Endothelial cell of umbilical vein (primary cell): ENCODE measurements at regions of chr3 and their contacts with region 1.

Region 1: GRCh38 chr3:141738022-141738890 is at the start of gene RNF7:
- DNase-seq: peak; percentile 96
- H3K4me3 ChIP-seq: peak within 1 kb of the TSS; percentile 39 to 96 (median 85)
- H3K27ac ChIP-seq: peak within 1 kb of the TSS; percentile 72
- H3K4me1 ChIP-seq: peaks cover 19% of the 10 kb centered on the region
- H3K27me3 ChIP-seq: peaks cover 0 to 2% of the 10 kb centered on the region in 2 experiments
- CTCF ChIP-seq: peak; percentile 91 to 98
- POLR2A ChIP-seq: peak; percentile 76
- total RNA-seq, gene RNF7: 121 and 136 TPM in 2 replicates

Region 2: DNA sequence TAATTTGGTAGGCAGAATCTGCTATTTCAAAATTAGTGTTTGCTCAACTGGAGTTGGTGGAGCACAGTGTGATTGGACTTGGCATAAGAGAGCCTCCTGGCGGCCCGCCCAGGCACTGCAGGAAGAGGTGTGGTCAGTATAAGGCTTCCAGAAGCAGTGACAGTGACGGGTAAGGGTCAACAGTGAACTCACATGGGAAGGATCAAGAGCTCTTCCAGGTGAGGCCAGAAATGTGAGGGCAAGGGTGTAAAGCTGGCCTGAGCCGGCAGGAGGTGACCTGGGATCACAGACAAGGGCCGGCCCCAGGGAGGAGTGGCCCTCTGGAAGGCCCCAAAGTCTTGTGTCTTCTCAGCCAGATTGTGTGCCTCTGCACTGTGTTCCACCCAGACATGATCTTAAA is 93.3 kb before region 1 on chr3:
- CTCF ChIA-PET with region 1: no interaction called
- POLR2A ChIA-PET with region 1: no interaction called
- dilution Hi-C with region 1: no loop called
- intact Hi-C with region 1: loop called (anchors 1 kb)
- DNase-seq: peak; percentile 43
- H3K4me3 ChIP-seq: no peak overlapping the region
- H3K27ac ChIP-seq: no peak overlapping the region
- H3K4me1 ChIP-seq: no peaks in the 10 kb centered on the region
- H3K27me3 ChIP-seq: no peaks in the 10 kb centered on the region
- CTCF ChIP-seq: peak; percentile 76 to 88
- POLR2A ChIP-seq: no peak

Region 3: GRCh38 chr3:141753399-141753798 is 15.1 kb after region 1 on chr3:
- CTCF ChIA-PET with region 1: interaction called, 10 read pairs
- POLR2A ChIA-PET with region 1: no interaction called
- dilution Hi-C with region 1: no loop called
- intact Hi-C with region 1: no loop called
- DNase-seq: no peak
- H3K4me3 ChIP-seq: no peak overlapping the region
- H3K27ac ChIP-seq: no peak overlapping the region
- H3K4me1 ChIP-seq: no peaks in the 10 kb centered on the region
- H3K27me3 ChIP-seq: no peaks in the 10 kb centered on the region
- CTCF ChIP-seq: no peak
- POLR2A ChIP-seq: no peak

Region 4: DNA sequence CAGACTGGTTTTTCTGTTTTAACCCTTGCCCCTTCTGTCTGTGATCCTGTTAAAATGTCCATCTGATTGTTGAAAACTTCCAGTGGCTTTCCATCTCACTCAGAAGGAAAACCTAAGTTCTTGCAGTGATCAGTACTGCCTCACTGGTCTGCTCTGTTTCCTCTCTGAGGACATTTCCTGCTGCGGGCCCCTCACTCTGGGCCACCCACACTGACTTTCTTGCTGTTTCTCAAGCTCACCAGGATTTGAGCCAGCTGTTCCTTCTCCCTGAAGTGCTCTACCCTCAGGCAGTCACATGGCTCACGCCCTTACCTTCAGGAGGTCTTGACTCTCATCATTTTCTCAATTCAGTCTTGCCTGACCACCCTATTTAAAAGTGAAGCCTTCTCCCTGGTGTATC is 26.7 kb after region 1 on chr3:
- CTCF ChIA-PET with region 1: no interaction called
- POLR2A ChIA-PET with region 1: no interaction called
- dilution Hi-C with region 1: no loop called
- intact Hi-C with region 1: no loop called
- DNase-seq: no peak
- H3K4me3 ChIP-seq: no peak overlapping the region
- H3K27ac ChIP-seq: no peak overlapping the region
- H3K4me1 ChIP-seq: peaks cover 3% of the 10 kb centered on the region
- H3K27me3 ChIP-seq: peaks cover 0 to 4% of the 10 kb centered on the region in 2 experiments
- CTCF ChIP-seq: no peak
- POLR2A ChIP-seq: no peak

Region 5: DNA sequence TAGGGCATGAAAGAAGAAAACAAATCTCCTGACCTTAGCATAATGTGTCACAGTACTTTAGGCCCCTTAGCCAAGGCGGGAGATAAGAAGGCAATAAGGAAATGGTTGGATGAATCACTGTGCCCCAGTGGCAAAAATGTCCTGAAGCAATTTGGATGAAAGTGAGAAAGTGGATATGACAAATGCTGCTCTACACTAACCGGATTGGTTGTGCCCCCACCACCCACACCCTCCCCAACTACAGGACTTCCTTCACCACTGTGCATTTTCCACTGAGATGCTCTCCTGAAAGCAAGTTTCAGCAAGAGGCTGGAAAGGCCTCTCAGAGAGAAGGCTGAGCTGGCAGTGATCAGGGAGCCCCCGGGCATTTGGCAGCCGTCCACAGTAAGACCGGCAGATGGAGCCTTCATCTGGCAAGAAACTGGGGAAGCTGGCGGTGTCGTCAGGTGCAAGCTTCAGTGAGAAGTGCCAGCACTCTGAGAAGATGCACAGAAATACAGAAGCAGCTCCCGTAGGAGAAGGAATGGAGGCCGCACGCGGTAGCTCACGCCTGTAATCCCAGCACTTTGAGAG is 202.0 kb after region 1 on chr3:
- CTCF ChIA-PET with region 1: interaction called, 3 read pairs
- POLR2A ChIA-PET with region 1: no interaction called
- dilution Hi-C with region 1: no loop called
- intact Hi-C with region 1: loop called (anchors 1 kb)
- DNase-seq: peak; percentile 84
- H3K4me3 ChIP-seq: no peak overlapping the region
- H3K27ac ChIP-seq: no peak overlapping the region
- H3K4me1 ChIP-seq: peaks cover 22% of the 10 kb centered on the region
- H3K27me3 ChIP-seq: peaks cover 17 to 20% of the 10 kb centered on the region in 2 experiments
- CTCF ChIP-seq: no peak
- POLR2A ChIP-seq: no peak

Region 6: GRCh38 chr3:142279965-142280590 is 541.8 kb after region 1 on chr3:
- CTCF ChIA-PET with region 1: no interaction called
- POLR2A ChIA-PET with region 1: no interaction called
- dilution Hi-C with region 1: no loop called
- intact Hi-C with region 1: loop called (anchors 5 kb)
- DNase-seq: peak; percentile 66
- H3K4me3 ChIP-seq: no peak overlapping the region
- H3K27ac ChIP-seq: no peak overlapping the region
- H3K4me1 ChIP-seq: no peaks in the 10 kb centered on the region
- H3K27me3 ChIP-seq: peaks cover 0 to 2% of the 10 kb centered on the region in 2 experiments
- CTCF ChIP-seq: peak; percentile 43 to 49
- POLR2A ChIP-seq: no peak